ENCODE measurements at regions of chr5 and their contacts with region 1.

Region 1: DNA sequence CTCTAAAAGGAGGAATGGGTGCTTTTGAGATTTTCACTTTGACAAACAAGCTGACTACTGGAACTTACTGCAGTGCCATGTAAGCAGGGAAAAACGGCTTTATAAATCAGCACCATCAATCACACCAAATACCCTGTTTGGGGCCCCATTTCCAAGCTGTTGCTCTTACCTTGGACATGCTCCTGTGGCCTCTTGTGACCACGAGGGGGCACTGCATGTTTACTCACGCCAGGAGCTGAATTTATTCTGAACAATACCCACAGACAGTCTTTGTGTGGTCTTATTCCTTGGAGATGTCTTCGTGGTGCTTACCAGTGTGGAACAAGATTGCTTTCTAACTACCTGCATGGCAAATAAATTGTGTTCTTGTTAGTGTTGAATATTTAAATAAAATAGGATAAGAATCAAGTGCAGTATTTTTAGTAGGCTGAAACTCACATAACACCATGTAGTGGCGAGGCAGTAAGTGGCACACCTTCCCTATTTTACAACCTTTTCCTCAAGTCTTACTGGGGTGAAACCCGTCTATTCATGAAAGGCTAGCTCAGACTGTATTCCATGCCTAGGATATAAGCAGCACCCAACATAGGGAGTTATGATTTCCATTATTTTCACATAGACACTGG is 155.5 kb upstream of the NMUR2 start:
- DNase-seq: peak; percentile 22
- CTCF ChIP-seq: peak; percentile 69

Region 2: DNA sequence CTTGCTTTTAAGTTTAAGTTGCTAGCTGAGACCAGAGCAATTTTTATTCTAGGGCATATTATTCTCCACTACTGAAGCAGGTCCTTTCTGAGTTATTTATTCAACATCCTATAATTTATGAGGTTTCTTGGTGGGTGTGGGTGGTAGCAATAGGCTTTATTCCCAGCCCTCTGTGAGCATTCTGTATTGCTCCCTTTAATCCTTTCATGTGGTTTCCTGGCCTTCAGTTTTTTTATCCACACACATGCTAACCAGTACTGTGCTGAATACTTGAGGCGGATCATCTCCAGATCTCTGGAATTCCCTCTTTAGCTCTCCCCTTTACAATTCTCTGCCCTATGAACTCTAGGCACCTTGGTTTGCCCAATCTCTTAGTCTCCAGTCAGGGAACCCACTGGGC is 544.2 kb before region 1 on chr5:
- in situ Hi-C with region 1: no loop called
- DNase-seq: no peak
- CTCF ChIP-seq: no peak

Region 3: DNA sequence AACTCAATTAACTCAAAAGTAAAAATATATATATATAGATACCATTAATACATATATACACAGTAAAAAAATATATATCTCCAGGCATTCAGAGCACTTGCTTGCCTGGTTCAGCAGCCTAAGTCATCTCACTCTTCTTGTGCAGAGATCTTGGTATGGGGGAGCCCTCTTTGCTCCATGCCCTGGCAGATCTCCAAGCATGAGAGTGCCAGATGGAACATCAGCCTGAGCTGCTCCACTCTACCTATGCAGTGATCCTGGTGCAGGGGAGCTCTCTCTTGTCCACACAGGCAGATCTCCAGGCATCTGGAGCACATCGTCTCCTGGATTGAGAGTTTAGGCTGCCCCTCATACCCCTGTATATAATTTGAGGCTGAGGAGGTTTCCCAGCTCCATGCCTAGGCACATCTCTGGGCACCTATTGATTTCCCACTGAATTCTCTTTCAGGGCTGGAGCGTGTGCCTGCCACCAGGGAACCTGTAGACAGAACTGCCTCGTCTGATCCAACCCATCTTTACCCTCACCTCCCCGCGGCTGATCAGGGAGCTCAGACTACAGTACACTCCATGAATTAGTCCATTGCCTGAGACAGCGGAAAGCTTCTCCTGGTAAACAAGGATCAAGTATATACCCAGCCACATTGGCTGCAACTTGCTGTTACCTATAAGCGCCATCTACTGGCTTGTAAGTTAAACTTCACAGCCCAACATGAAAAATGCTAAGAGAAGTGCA is 587.4 kb after region 1 on chr5:
- in situ Hi-C with region 1: loop called (anchors 25 kb)
- DNase-seq: peak; percentile 3
- CTCF ChIP-seq: peak; percentile 55